ENCODE measurements at regions of chr17 and their contacts with region 1.

Region 1: DNA sequence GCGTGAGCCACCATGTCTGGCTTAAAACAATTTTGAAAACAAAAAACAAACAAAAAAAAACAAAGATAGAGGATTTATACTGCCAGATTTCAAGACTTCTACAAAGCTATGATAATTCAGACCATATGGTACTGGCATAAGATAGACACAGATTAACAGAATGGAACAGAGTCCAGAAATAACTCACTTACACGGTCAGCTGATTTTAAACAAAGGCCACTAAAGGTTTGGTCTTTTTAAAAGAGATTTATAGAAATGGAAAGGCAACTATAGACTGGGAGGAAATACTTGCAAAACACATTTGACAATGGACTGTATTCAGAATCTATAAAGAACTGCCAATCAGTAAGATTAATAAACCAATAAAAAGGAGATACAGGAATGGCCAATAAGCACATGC is 48.6 kb upstream of the MNT start:
- DNase-seq: no peak
- H3K4me3 ChIP-seq: no peak overlapping the region
- H3K4me3 Mint-ChIP-seq: no peak overlapping the region
- H3K27ac Mint-ChIP-seq: no peak overlapping the region
- H3K4me1 ChIP-seq: no peaks in the 10 kb centered on the region
- H3K4me1 Mint-ChIP-seq: no peaks in the 10 kb centered on the region
- H3K27me3 ChIP-seq: no peaks in the 10 kb centered on the region
- H3K27me3 Mint-ChIP-seq: no peaks in the 10 kb centered on the region
- CTCF ChIP-seq: no peak

Region 2: GRCh38 chr17:2215616-2216364 is 233.7 kb before region 1 on chr17:
- CTCF ChIA-PET with region 1: no interaction called
- POLR2A ChIA-PET with region 1: no interaction called
- intact Hi-C with region 1: no loop called
- DNase-seq: no peak
- H3K4me3 ChIP-seq: no peak overlapping the region
- H3K4me3 Mint-ChIP-seq: no peak overlapping the region
- H3K27ac Mint-ChIP-seq: no peak overlapping the region
- H3K4me1 ChIP-seq: no peaks in the 10 kb centered on the region
- H3K4me1 Mint-ChIP-seq: peaks cover 5% of the 10 kb centered on the region
- H3K27me3 ChIP-seq: no peaks in the 10 kb centered on the region
- H3K27me3 Mint-ChIP-seq: no peaks in the 10 kb centered on the region
- CTCF ChIP-seq: no peak

Region 3: DNA sequence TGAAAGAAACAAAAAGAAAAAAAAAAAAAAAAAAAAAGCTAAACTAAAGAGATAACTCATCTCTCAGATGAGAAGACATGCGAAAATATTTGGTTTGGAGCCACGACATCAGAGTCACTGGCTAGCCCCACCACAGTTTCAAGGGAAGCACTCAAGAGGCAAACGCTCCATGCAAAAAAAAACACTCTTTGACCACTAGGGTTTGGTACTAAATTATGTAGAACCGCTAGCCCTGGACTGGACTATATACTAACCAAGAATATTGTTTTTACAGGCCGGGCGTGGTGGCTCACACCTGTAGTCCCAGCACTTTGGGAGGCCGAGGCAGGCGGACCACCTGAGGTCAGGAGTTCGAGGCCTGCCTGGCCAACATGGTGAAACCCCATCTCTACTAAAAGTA is 24.9 kb after region 1 on chr17:
- CTCF ChIA-PET with region 1: no interaction called
- POLR2A ChIA-PET with region 1: no interaction called
- intact Hi-C with region 1: no loop called
- DNase-seq: no peak
- H3K4me3 ChIP-seq: no peak overlapping the region
- H3K4me3 Mint-ChIP-seq: no peak overlapping the region
- H3K27ac Mint-ChIP-seq: no peak overlapping the region
- H3K4me1 ChIP-seq: no peaks in the 10 kb centered on the region
- H3K4me1 Mint-ChIP-seq: no peaks in the 10 kb centered on the region
- H3K27me3 ChIP-seq: no peaks in the 10 kb centered on the region
- H3K27me3 Mint-ChIP-seq: no peaks in the 10 kb centered on the region
- CTCF ChIP-seq: no peak

Region 4: GRCh38 chr17:2500446-2500845 is 51.0 kb after region 1 on chr17:
- CTCF ChIA-PET with region 1: no interaction called
- POLR2A ChIA-PET with region 1: no interaction called
- intact Hi-C with region 1: loop called (anchors 10 kb)
- DNase-seq: no peak
- H3K4me3 ChIP-seq: no peak overlapping the region
- H3K4me3 Mint-ChIP-seq: no peak overlapping the region
- H3K27ac Mint-ChIP-seq: no peak overlapping the region
- H3K4me1 ChIP-seq: no peaks in the 10 kb centered on the region
- H3K4me1 Mint-ChIP-seq: peaks cover 7% of the 10 kb centered on the region
- H3K27me3 ChIP-seq: no peaks in the 10 kb centered on the region
- H3K27me3 Mint-ChIP-seq: no peaks in the 10 kb centered on the region
- CTCF ChIP-seq: no peak